GM12878 (cell line): ENCODE measurements at regions of chr6 and their contacts with region 1.

Region 1: GRCh38 chr6:13908955-13909381 is 15.8 kb upstream of the RNF182 start:
- DNase-seq: peak; percentile 27
- ATAC-seq: peak; percentile 91
- H3K4me3 ChIP-seq: no peak overlapping the region
- H3K27ac ChIP-seq: no peak overlapping the region
- H3K4me1 ChIP-seq: no peaks in the 10 kb centered on the region
- H3K27me3 ChIP-seq: no peaks in the 10 kb centered on the region
- CTCF ChIP-seq: peak; percentile 72 to 88 (median 72)
- EP300 ChIP-seq: no peak
- POLR2A ChIP-seq: no peak
- RAD21 ChIP-seq: peak; percentile 93

Region 2: GRCh38 chr6:13920552-13920951 is 11.6 kb after region 1 on chr6:
- CTCF ChIA-PET with region 1: interaction called, 17 read pairs
- POLR2A ChIA-PET with region 1: no interaction called
- RAD21 ChIA-PET with region 1: no interaction called
- SMC1A ChIA-PET with region 1: interaction called, 6 read pairs
- in situ Hi-C with region 1: no loop called
- intact Hi-C with region 1: no loop called
- DNase-seq: no peak
- ATAC-seq: no peak
- H3K4me3 ChIP-seq: no peak overlapping the region
- H3K27ac ChIP-seq: no peak overlapping the region
- H3K4me1 ChIP-seq: peaks cover 3% of the 10 kb centered on the region; the same call in 1 of the 2 replicates
- H3K27me3 ChIP-seq: peaks cover 6 to 19% of the 10 kb centered on the region in 2 experiments
- CTCF ChIP-seq: no peak
- EP300 ChIP-seq: no peak
- POLR2A ChIP-seq: no peak
- RAD21 ChIP-seq: no peak

Region 3: DNA sequence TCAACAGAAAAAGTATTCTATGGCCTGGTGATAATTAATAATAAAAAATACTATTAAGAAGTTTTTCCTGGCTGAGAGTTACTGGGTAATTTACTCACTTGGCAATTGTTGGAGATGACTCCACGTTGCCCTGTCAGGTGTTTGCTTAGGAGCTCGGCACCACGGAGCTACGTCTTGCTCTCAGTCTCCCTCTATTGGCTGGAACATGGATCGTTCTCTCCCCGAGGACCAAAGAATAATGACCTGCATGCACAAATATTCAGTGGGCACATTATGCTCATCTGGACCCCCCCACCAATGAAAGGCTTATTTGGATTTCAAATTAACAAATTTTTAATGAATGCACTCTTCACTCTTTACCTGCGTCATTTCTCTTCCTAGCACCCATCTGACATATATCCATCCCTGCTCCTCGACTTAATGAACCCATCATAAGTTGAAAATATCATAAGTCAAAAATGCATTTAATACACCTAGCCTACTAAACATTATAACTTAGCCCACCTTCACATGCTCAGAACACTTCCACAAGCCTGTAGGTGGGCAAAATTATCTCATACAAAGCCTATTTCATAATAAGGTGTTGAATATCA is 137.6 kb after region 1 on chr6:
- CTCF ChIA-PET with region 1: interaction called, 83 read pairs
- POLR2A ChIA-PET with region 1: no interaction called
- RAD21 ChIA-PET with region 1: interaction called, 8 read pairs
- SMC1A ChIA-PET with region 1: interaction called, 28 read pairs
- in situ Hi-C with region 1: no loop called
- intact Hi-C with region 1: loop called (anchors 1 kb)
- DNase-seq: no peak
- ATAC-seq: peak; percentile 94
- H3K4me3 ChIP-seq: no peak overlapping the region
- H3K27ac ChIP-seq: no peak overlapping the region
- H3K4me1 ChIP-seq: no peaks in the 10 kb centered on the region
- H3K27me3 ChIP-seq: peaks cover 2 to 3% of the 10 kb centered on the region in 2 experiments; a peak in 2 of 4 replicates
- CTCF ChIP-seq: peak; percentile 63 to 79 (median 75)
- EP300 ChIP-seq: no peak
- POLR2A ChIP-seq: no peak
- RAD21 ChIP-seq: peak; percentile 64

Region 4: DNA sequence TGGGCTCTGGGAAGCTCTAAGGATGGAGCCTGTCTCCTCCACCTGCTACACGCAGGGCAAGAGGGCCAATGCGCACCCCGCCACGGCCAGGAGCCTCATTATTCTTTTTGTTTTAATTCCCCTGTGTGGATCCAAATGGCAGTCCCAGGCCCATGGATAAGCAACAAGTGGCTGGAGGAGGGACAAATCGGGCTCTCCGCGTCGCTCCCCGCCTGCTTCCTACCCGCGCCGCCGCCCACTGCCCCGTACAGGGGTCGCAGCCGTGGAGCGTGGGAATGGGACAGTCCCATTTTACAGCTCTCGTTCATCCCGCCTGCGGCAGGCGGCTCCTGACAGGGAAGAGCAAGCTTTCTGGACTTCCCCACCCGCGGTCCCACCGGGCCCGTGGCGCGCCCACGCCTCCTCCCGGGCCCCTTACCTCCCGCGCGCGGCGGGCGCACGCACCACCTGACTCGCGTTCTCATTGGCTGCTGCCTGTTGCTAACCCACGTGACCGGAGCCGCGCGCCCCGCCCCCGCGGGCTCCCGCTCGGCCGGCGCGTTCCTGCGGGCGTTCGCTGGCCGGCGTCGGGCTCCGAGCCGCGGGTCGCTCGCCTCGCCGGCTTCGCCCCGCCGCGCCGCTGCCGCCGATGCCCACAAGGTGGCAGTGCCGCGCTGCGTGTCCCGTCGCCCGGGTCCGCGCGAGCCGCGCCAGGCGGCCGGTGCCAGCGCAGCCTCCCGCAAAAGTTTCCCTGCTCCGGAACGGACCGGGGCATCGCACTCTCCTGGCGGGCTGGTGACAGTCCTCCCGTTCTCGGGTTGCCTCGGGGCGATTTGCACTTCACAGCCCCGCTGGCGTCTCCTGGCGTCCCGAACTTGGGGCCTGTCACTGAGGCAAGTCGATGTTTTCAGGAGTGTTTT is 301.9 kb after region 1 on chr6:
- CTCF ChIA-PET with region 1: interaction called, 10 read pairs
- POLR2A ChIA-PET with region 1: no interaction called
- RAD21 ChIA-PET with region 1: no interaction called
- SMC1A ChIA-PET with region 1: interaction called, 3 read pairs
- in situ Hi-C with region 1: no loop called
- intact Hi-C with region 1: loop called (anchors 1 kb)
- DNase-seq: peak; percentile 48
- ATAC-seq: peak; percentile 98
- H3K4me3 ChIP-seq: peak overlapping the region; percentile 91
- H3K27ac ChIP-seq: peak overlapping the region; percentile 81
- H3K4me1 ChIP-seq: peaks cover 16% of the 10 kb centered on the region
- H3K27me3 ChIP-seq: no peaks in the 10 kb centered on the region
- CTCF ChIP-seq: peak; percentile 49 to 80 (median 60); a peak in 5 of 6 replicates
- EP300 ChIP-seq: no peak
- POLR2A ChIP-seq: peak; percentile 78
- RAD21 ChIP-seq: peak; percentile 91

Region 5: DNA sequence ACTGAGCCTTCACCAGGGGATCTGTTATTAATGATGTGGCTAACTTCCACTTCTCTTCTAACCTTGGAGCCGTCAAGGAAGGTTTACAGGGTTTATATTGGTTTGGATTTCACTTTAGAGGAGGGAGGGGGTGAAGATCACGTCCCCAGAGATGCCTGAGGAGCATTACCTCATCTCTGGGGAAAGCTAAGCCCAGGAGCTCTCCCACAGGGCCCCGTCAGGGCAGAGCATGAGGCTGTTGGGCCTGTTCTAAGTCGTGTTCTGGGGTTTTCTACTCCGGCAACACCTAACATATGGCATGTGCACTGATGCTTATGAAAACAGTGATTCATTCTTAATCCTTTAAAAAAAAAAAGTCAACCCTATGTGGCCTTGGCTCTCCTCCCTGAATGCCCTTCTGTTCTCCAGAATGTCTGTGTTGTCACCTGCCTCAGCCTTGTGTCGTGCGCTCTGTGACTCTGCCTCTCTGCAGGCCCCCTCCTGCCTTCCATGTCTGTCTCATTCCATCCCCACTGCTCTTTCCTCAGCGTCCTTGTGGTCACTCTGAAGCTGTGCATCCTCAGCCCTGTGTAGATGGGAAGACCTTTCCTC is 1239.5 kb after region 1 on chr6:
- CTCF ChIA-PET with region 1: no interaction called
- POLR2A ChIA-PET with region 1: no interaction called
- RAD21 ChIA-PET with region 1: no interaction called
- SMC1A ChIA-PET with region 1: no interaction called
- in situ Hi-C with region 1: no loop called
- intact Hi-C with region 1: no loop called
- DNase-seq: no peak
- ATAC-seq: peak; percentile 75
- H3K4me3 ChIP-seq: no peak overlapping the region
- H3K27ac ChIP-seq: no peak overlapping the region
- H3K4me1 ChIP-seq: peaks cover 14% of the 10 kb centered on the region
- H3K27me3 ChIP-seq: no peaks in the 10 kb centered on the region
- CTCF ChIP-seq: no peak
- EP300 ChIP-seq: no peak; a peak in 1 of 4 replicates
- POLR2A ChIP-seq: no peak
- RAD21 ChIP-seq: no peak